ENCODE measurements at regions of chr15 and their contacts with region 1.

Region 1: DNA sequence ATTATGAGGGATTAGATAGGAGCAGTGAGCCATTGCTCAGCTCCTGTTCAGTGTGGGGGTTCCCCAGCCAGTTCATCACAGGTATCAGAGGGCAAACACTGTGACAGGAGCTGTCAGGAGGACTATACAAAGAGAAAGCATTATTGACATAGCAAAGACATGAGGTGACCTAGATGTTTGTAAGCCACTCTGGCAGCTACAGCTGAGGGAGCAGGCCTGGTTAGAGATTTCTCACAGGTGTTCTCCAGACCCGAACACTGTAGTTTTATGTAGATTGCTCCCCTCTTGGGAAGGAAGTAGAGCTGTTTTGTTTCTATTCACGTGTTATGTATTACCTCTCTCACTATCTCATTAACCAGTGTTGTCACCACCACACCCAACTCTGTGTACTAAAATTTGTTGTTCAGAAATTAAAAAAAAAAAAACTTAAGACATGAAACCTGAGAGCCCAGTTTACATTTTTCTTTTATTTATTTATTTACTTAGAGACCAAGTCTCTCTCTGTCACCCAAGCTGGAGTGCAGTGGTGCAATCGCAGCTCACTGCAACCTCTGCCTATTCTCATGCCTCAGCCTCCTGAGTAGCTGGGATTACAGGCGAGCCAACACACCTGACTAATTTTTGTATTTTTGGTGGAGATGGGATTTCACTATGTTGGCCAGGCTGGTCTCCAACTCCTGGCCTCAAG is 123.7 kb downstream of the RBPMS2 start:
- DNase-seq: no peak
- H3K4me3 ChIP-seq: no peak overlapping the region
- H3K27ac ChIP-seq: no peak overlapping the region
- H3K4me1 ChIP-seq: peaks cover 0 to 31% (median 4%) of the 10 kb centered on the region in 3 donors
- H3K27me3 ChIP-seq: no peaks in the 10 kb centered on the region
- CTCF ChIP-seq: no peak
- POLR2A ChIP-seq: no peak

Region 2: GRCh38 chr15:64430000-64430735 is 221.5 kb before region 1 on chr15:
- intact Hi-C with region 1: loop called (anchors 10 kb)
- DNase-seq: no peak
- H3K4me3 ChIP-seq: no peak overlapping the region
- H3K27ac ChIP-seq: peak overlapping the region in 3 of 4 donors; percentile 3 to 47 (median 19)
- H3K4me1 ChIP-seq: peaks cover 0 to 26% (median 7%) of the 10 kb centered on the region in 3 donors
- H3K27me3 ChIP-seq: no peaks in the 10 kb centered on the region
- CTCF ChIP-seq: no peak
- POLR2A ChIP-seq: no peak

Region 3: GRCh38 chr15:64443747-64444621 is 207.7 kb before region 1 on chr15:
- intact Hi-C with region 1: no loop called
- DNase-seq: no peak
- H3K4me3 ChIP-seq: no peak overlapping the region
- H3K27ac ChIP-seq: peak overlapping the region; percentile 35 to 77 (median 60)
- H3K4me1 ChIP-seq: peaks cover 8 to 26% (median 9%) of the 10 kb centered on the region in 3 donors
- H3K27me3 ChIP-seq: no peaks in the 10 kb centered on the region
- CTCF ChIP-seq: no peak
- POLR2A ChIP-seq: no peak

Measured in esophagus squamous epithelium (tissue), 5 donors.